Activated B cell treated with CpG ODN at 0.5 μM for 24 hours (primary cell): ENCODE measurements at regions of chr1 and their contacts with region 1.

Region 1: DNA sequence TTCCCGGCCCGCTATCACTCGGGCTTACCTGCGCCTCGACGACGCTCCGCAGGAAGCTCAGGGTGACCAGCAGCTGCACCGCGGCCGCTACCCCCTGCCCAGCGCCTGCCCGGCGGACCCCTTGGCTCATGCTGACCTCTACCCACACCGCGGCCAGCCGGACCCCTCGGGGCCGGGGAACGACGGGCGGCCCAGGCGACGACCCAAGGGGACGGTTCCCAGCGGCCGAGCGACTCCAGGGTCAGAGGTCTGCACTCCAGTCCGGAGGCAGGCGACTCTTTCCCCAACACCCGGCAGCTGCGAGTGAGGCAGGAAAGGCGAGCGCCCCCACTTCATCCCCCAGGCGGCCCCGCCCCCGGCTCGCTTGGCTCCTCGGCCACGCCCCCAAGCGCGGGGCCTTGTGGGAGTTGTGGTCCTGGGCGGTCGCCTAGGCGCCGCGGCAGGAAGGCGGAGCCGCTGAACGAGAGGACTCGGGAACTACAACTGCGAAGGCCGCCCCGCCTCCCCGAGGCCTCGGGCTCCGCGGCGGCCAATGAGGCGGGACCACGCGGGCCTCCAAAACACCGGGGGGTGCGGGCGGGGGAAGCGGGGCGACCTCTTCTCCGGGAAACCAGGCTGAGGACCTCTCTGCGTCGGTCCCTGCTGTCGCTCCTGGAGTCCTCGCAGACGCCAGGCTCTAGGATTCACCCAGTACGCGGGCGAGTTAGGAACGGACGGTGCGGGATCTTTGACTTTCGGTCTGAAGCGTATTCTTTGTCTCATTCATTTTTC is at the start of gene ERO1B:
- DNase-seq: peak; percentile 100
- ATAC-seq: peak; percentile 91
- H3K4me3 Mint-ChIP-seq: peak within 1 kb of the TSS; percentile 97
- H3K27ac Mint-ChIP-seq: peak within 1 kb of the TSS; percentile 89
- H3K4me1 Mint-ChIP-seq: peaks cover 40% of the 10 kb centered on the region
- H3K27me3 Mint-ChIP-seq: no peaks in the 10 kb centered on the region
- CTCF ChIP-seq: no peak
- total RNA-seq, gene ERO1B: 13.2 and 17.5 TPM in 2 replicates

Region 2: DNA sequence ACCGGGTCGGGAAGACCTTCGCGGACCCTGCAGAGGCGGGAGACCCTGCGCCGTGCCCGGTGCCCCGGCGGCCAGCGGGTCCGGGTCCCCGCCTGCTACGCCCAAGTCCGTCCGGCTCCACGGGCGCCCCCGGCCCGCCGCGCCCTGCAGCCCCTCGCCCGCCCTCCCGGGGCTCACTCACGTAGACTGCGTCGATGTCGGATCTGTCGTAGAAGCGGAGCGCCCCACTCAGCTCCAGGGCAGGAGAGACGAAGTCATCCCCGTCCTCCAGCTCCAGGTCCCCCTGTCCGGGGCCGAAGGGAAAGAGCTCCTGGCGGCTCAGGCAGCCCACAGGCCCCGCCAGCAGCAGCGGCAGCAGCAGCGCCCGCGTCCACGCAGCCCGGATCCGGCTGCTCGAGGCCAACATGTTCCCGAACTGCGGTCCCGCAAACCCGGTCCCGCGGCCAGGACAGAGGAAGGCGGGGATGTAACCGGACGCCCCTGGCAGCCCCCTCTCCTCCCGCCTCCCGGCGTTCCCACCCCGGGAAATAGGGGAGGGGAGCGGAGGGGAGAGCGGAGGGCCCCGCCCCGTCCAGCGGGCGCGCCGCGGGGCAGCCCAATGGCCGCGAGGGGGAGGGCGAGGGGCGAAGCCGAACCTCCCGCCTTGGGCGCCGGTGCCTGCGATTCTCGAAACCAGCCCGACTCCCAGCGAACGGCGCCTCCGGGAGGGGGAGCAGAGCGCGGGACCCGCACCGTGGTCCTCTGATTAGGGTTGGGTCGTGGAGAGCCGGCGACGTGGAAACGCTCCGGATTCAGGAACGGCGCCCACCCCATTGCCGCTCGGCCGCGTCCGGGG is 216.9 kb before region 1 on chr1 and contains the start of gene NID1:
- CTCF ChIA-PET with region 1: no interaction called
- POLR2A ChIA-PET with region 1: interaction called, 5 read pairs
- intact Hi-C with region 1: loop called (anchors 1 kb)
- DNase-seq: peak; percentile 38
- ATAC-seq: peak; percentile 18
- H3K4me3 Mint-ChIP-seq: peak within 1 kb of the TSS; percentile 70
- H3K27ac Mint-ChIP-seq: no peak within 1 kb of the TSS
- H3K4me1 Mint-ChIP-seq: peaks cover 33% of the 10 kb centered on the region
- H3K27me3 Mint-ChIP-seq: peaks cover 25% of the 10 kb centered on the region
- CTCF ChIP-seq: no peak
- total RNA-seq, gene NID1: 0.04 and 0.10 TPM in 2 replicates

Region 3: GRCh38 chr1:236120721-236121153 is 161.1 kb before region 1 on chr1:
- CTCF ChIA-PET with region 1: no interaction called
- POLR2A ChIA-PET with region 1: no interaction called
- intact Hi-C with region 1: loop called (anchors 5 kb)
- DNase-seq: no peak
- ATAC-seq: peak; percentile 52
- H3K4me3 Mint-ChIP-seq: peak overlapping the region; percentile 82
- H3K27ac Mint-ChIP-seq: peak overlapping the region; percentile 77
- H3K4me1 Mint-ChIP-seq: peaks cover 27% of the 10 kb centered on the region
- H3K27me3 Mint-ChIP-seq: no peaks in the 10 kb centered on the region
- CTCF ChIP-seq: no peak

Region 4: GRCh38 chr1:236156512-236157208 is 125.2 kb before region 1 on chr1:
- CTCF ChIA-PET with region 1: no interaction called
- POLR2A ChIA-PET with region 1: interaction called, 14 read pairs
- intact Hi-C with region 1: loop called (anchors 1 kb)
- DNase-seq: peak; percentile 44
- ATAC-seq: peak; percentile 85
- H3K4me3 Mint-ChIP-seq: peak overlapping the region; percentile 52
- H3K27ac Mint-ChIP-seq: peak overlapping the region; percentile 83
- H3K4me1 Mint-ChIP-seq: peaks cover 57% of the 10 kb centered on the region
- H3K27me3 Mint-ChIP-seq: peaks cover 2% of the 10 kb centered on the region
- CTCF ChIP-seq: no peak

Region 5: DNA sequence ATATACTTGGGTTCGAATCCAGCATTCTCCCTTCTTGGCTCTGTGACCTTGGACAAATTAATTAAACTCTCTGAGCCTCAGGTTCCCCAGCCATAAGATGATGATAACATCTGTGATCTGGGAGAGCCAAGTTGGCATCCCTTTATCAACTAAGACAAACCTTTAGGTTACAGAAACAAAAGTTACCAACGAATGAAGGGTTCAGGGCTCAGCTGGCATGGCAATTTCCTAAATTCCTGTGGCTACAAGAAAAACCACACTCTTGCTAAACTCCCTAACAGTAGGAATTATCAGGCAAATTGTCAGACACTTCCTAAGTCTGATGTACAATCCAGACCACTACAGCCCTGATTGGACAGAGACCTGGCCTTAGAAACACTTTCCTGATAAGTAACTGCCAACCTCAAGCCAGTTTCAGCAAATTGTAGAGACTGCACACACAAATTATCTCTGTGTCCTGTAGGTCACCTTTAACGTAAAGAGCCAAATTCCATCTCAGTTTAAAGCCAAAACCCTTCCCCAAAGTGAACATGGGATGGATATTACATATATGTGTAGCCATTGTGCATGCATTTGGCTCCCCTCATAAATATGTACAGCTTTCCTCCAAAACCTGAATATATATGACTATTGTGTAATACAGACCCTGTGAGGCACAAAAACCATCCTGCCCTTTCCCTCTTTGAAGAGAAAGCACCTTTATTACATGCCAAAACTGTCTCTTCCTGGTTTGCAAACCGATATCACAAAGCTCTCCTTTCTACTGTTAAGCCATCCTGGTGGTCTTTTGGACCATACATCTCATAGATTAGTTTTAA is 72.7 kb after region 1 on chr1:
- CTCF ChIA-PET with region 1: no interaction called
- POLR2A ChIA-PET with region 1: no interaction called
- intact Hi-C with region 1: no loop called
- DNase-seq: no peak
- ATAC-seq: no peak
- H3K4me3 Mint-ChIP-seq: no peak overlapping the region
- H3K27ac Mint-ChIP-seq: no peak overlapping the region
- H3K4me1 Mint-ChIP-seq: no peaks in the 10 kb centered on the region
- H3K27me3 Mint-ChIP-seq: peaks cover 19% of the 10 kb centered on the region
- CTCF ChIP-seq: no peak

Region 6: GRCh38 chr1:236523701-236524141 is 241.9 kb after region 1 on chr1 and contains the start of gene LGALS8:
- CTCF ChIA-PET with region 1: no interaction called
- POLR2A ChIA-PET with region 1: no interaction called
- intact Hi-C with region 1: loop called (anchors 1 kb)
- DNase-seq: peak; percentile 69
- ATAC-seq: peak; percentile 60
- H3K4me3 Mint-ChIP-seq: peak within 1 kb of the TSS; percentile 95
- H3K27ac Mint-ChIP-seq: peak within 1 kb of the TSS; percentile 90
- H3K4me1 Mint-ChIP-seq: peaks cover 12% of the 10 kb centered on the region
- H3K27me3 Mint-ChIP-seq: no peaks in the 10 kb centered on the region
- CTCF ChIP-seq: no peak
- total RNA-seq, gene LGALS8: 36.0 and 37.4 TPM in 2 replicates

Region 7: GRCh38 chr1:236795035-236795756 is 513.4 kb after region 1 on chr1 and contains the start of gene MTR:
- CTCF ChIA-PET with region 1: no interaction called
- POLR2A ChIA-PET with region 1: no interaction called
- intact Hi-C with region 1: loop called (anchors 1 kb)
- DNase-seq: peak; percentile 91
- ATAC-seq: peak; percentile 94
- H3K4me3 Mint-ChIP-seq: peak within 1 kb of the TSS; percentile 97
- H3K27ac Mint-ChIP-seq: peak within 1 kb of the TSS; percentile 98
- H3K4me1 Mint-ChIP-seq: peaks cover 41% of the 10 kb centered on the region
- H3K27me3 Mint-ChIP-seq: peaks cover 2% of the 10 kb centered on the region
- CTCF ChIP-seq: no peak
- total RNA-seq, gene MTR: 31.2 and 37.1 TPM in 2 replicates